AG04449 (cell line): ENCODE measurements at regions of chr5 and their contacts with region 1.

Region 1: GRCh38 chr5:103475629-103476240 is 86.9 kb downstream of the NUDT12 start:
- DNase-seq: no peak
- H3K4me3 ChIP-seq: no peak overlapping the region
- CTCF ChIP-seq: peak; percentile 42

Region 2: DNA sequence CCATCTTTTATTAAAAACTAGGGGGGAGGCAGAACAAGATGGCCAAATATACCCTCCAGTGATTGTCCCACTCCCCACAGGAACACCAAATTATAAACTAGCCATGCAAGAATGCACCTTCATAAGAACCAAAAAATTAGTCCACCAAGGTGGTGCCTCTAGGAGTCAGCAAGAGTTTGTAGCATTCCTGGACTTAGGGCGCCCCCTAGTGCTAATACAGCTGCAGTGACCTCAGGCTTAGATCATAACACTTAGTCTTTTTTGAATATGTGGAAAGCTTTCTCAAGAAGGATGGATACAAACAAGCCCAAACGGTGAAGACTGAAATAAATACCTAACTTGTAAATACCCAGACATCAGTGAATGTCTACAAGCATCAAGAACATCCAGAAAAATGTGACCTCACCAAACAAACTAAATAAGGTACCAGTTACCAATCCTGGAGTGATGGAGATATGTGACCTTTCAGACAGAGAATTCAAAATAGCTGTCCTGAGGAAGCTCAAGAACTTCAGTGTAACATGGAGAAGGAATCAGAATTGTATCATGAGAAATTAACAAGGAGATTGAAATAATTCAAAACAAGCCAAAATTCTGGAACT is 336.4 kb before region 1 on chr5:
- CTCF ChIA-PET with region 1: interaction called, 23 read pairs
- POLR2A ChIA-PET with region 1: no interaction called
- DNase-seq: peak; percentile 9
- H3K4me3 ChIP-seq: no peak overlapping the region
- CTCF ChIP-seq: peak; percentile 88

Region 3: DNA sequence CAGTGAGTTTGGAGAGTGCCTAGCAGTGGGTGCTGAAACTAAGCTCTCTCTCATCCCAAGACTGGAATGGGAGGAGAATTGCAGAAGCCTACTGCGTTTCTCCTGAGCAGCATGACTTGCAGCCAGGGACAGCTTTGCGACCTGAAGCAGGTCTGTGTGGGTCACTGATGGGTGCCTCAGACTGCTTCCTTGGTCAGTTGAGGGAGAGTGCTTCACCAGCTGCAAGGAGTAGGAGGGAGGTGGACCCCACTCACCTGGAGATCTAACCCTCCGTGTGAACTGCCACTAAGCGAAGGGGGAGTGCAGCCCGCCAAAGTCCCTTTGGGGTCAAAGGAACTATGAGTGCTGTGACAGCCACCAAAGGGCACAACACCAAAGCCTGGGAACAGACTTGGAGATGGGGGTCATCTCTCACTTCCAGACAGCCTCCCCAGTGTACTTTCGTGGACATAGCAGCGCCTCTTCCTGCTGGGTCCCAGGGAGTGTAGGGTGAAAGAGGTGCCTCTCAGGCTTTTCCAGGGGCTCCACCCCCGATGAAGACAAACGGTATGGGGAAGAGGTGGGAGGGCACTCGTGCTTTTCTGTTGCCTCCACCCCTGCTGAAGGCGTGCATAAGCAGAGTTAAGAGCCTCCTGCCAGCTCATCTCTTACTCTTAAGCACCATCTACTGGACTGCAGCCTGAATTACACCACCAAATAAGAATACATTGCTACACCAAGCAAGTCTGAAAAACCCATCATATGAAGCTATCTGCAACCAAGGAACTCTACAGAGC is 251.4 kb before region 1 on chr5:
- CTCF ChIA-PET with region 1: interaction called, 58 read pairs
- POLR2A ChIA-PET with region 1: no interaction called
- DNase-seq: no peak
- H3K4me3 ChIP-seq: no peak overlapping the region
- CTCF ChIP-seq: peak; percentile 44

Region 4: DNA sequence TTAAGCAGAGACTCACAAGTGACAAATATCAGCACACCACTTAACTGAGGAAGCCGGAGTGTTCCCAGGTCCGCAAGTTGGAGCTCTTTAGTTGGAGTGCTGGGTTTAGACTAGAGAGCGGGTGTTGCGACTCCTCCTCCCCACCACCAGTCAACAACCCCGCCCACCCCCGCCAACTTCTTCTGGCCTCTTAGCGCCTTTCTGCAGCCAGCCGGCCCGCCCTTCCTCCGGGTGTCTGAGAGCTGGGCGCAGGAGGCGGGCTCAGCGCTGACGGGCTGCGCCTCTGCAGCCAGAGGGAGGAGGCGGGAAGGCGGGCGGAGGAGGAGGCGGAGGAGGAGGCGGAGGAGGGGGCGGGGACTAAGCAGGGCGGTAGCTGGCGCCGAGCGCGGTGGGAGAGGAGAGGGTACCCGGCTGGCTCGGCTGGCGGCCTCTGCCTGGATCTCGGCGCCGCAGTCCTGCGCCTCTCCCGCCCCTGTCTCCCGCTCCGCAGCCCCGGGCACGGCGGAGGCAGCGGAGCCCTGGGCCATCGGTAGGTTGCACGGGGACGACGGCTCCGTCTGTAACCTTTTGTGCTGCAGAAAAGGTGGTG is 217.3 kb before region 1 on chr5 and contains the start of gene MACIR:
- CTCF ChIA-PET with region 1: interaction called, 128 read pairs
- POLR2A ChIA-PET with region 1: interaction called, 5 read pairs
- DNase-seq: peak; percentile 89
- H3K4me3 ChIP-seq: peak within 1 kb of the TSS; percentile 92
- CTCF ChIP-seq: no peak

Region 5: GRCh38 chr5:103422756-103423155 is 53.0 kb before region 1 on chr5:
- CTCF ChIA-PET with region 1: interaction called, 10 read pairs
- POLR2A ChIA-PET with region 1: no interaction called
- DNase-seq: no peak
- H3K4me3 ChIP-seq: no peak overlapping the region
- CTCF ChIP-seq: no peak

Region 6: GRCh38 chr5:103487218-103487617 is 11.5 kb after region 1 on chr5:
- CTCF ChIA-PET with region 1: interaction called, 62 read pairs
- POLR2A ChIA-PET with region 1: no interaction called
- DNase-seq: peak; percentile 52
- H3K4me3 ChIP-seq: no peak overlapping the region
- CTCF ChIP-seq: peak; percentile 5